ENCODE measurements at regions of chr20 and their contacts with region 1.

Region 1: GRCh38 chr20:17968366-17969279 is at the starts of genes MGME1 and SNX5:
- DNase-seq: peak; percentile 97 to 99 (median 99)
- H3K4me3 ChIP-seq: peak within 1 kb of the TSS; percentile 95
- H3K4me3 Mint-ChIP-seq: peak within 1 kb of the TSS; percentile 92 to 98 (median 96)
- H3K27ac ChIP-seq: peak within 1 kb of the TSS; percentile 90
- H3K27ac Mint-ChIP-seq: peak within 1 kb of the TSS; percentile 97 to 99 (median 98)
- H3K4me1 ChIP-seq: peaks cover 61% of the 10 kb centered on the region
- H3K4me1 Mint-ChIP-seq: peaks cover 68 to 83% (median 78%) of the 10 kb centered on the region in 3 donors
- H3K27me3 ChIP-seq: no peaks in the 10 kb centered on the region
- H3K27me3 Mint-ChIP-seq: no peaks in the 10 kb centered on the region
- total RNA-seq, gene MGME1: 29.2 to 31.8 TPM
- total RNA-seq, gene SNX5: 174 to 191 TPM

Region 2: GRCh38 chr20:17938871-17939619 is 29.6 kb before region 1 on chr20:
- CTCF ChIA-PET with region 1: interaction called, 12 read pairs
- POLR2A ChIA-PET with region 1: interaction called, 4 read pairs
- DNase-seq: peak; percentile 43 to 68 (median 47)
- H3K4me3 ChIP-seq: no peak overlapping the region
- H3K4me3 Mint-ChIP-seq: peak overlapping the region in 6 of 7 donors; percentile 11 to 65 (median 38)
- H3K27ac ChIP-seq: no peak overlapping the region
- H3K27ac Mint-ChIP-seq: peak overlapping the region in 7 of 8 donors; percentile 7 to 79 (median 25)
- H3K4me1 ChIP-seq: peaks cover 7% of the 10 kb centered on the region
- H3K4me1 Mint-ChIP-seq: peaks cover 7 to 18% (median 14%) of the 10 kb centered on the region in 3 donors
- H3K27me3 ChIP-seq: no peaks in the 10 kb centered on the region
- H3K27me3 Mint-ChIP-seq: no peaks in the 10 kb centered on the region

Region 3: GRCh38 chr20:17995967-17996819 is 27.6 kb after region 1 on chr20:
- CTCF ChIA-PET with region 1: interaction called, 22 read pairs
- POLR2A ChIA-PET with region 1: no interaction called
- DNase-seq: peak; percentile 3 to 59 (median 51)
- H3K4me3 ChIP-seq: no peak overlapping the region
- H3K4me3 Mint-ChIP-seq: no peak overlapping the region
- H3K27ac ChIP-seq: no peak overlapping the region
- H3K27ac Mint-ChIP-seq: peak overlapping the region in 2 of 8 donors; percentile 9 to 19
- H3K4me1 ChIP-seq: peaks cover 3% of the 10 kb centered on the region
- H3K4me1 Mint-ChIP-seq: peaks cover 5 to 7% (median 6%) of the 10 kb centered on the region in 3 donors
- H3K27me3 ChIP-seq: no peaks in the 10 kb centered on the region
- H3K27me3 Mint-ChIP-seq: no peaks in the 10 kb centered on the region

Region 4: DNA sequence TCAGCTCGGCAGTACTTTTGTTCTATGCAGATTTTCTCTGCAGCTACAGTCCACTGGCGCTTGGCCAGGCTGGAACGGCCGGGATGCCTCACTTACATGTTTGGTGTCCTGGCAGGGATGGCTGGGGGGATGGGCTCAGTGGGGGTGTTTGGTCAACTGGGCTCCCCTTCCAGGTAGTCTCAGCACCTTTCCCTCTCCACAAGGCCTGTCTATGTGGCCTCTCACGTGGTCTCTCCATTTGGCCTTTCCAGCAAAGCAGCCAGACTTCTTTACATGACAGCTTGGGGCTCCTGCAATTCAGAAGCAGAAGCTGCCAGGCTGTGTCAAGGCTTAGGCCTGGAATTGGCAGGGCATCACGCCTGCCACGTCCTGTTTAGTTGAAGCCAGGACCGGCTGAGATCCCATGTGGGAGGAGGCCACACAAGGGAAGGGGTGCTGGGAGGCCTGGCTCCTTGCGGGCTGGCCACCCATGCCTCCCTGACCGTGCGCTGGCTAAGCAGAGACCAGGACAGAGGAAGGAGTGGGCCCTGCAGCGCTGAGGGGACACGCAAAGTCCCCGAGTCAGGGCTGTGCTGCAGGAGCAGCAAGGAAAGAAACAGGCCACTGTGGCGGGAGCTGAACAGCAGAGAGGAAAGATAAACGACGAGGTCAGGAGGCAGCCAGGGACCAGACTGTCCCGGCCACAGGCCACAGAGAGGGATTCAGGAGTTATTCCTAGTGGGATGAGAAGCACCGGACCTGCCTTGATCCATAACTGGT is 39.1 kb after region 1 on chr20:
- CTCF ChIA-PET with region 1: no interaction called
- POLR2A ChIA-PET with region 1: no interaction called
- DNase-seq: no peak
- H3K4me3 ChIP-seq: no peak overlapping the region
- H3K4me3 Mint-ChIP-seq: no peak overlapping the region
- H3K27ac ChIP-seq: no peak overlapping the region
- H3K27ac Mint-ChIP-seq: no peak overlapping the region
- H3K4me1 ChIP-seq: no peaks in the 10 kb centered on the region
- H3K4me1 Mint-ChIP-seq: peaks cover 0 to 2% (median 0%) of the 10 kb centered on the region in 3 donors
- H3K27me3 ChIP-seq: no peaks in the 10 kb centered on the region
- H3K27me3 Mint-ChIP-seq: peaks cover 0 to 2% of the 10 kb centered on the region in 2 donors

Measured in CD8-positive, alpha-beta memory T cell (primary cell).